ENCODE measurements at regions of chr6 and their contacts with region 1.

Region 1: GRCh38 chr6:104789770-104790190 is 69.9 kb downstream of the HACE1 start:
- DNase-seq: peak; percentile 16

Region 2: GRCh38 chr6:105075210-105075609 is 285.4 kb after region 1 on chr6:
- CTCF ChIA-PET with region 1: interaction called, 10 read pairs
- POLR2A ChIA-PET with region 1: no interaction called
- DNase-seq: no peak

Measured in HEK293T (cell line).